Body of pancreas (tissue), 4 donors: ENCODE measurements at regions of chr22 and their contacts with region 1.

Region 1: DNA sequence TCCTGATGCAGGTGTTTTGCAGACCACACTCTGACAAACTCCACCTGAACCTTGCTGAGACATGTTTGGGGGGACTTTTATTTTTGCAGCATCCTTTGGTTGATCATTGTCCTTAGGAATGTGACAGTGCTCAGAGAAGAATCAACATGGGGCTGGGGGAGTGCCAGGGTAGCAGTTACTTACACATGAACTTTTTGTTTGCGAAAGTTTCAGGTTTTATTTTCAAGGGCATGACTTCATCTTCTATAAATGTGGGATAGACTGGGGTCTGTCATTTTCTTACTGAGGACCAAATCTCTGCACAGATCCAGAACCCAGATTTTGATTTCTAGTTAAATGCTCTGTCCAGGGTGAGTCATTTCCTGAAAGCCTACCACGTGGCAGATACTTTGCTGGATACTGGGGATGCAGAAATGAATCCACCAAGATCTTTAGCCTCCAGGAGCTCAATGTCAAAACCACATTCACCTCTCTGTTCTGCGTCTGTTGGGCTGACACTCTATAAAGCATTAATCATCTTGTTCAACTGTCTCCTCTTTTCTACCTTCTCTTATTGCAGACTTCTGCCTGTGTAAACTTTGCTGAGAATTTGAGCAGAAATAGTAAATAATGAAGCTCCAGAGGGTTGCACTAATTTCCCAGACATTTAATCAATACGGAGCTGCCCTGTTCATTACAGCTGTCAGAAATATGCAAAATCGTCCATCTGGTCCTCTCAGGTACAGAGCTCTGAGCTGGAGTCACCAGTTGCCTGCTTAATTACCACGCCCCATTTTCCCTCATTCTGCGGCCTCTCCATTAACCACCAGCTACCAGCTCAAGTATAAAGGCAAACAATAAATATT is 387.9 kb downstream of the MIAT start:
- DNase-seq: peak; percentile 13 to 23 (median 16)
- ATAC-seq: peak; percentile 62
- H3K4me3 ChIP-seq: no peak overlapping the region
- H3K27ac ChIP-seq: no peak overlapping the region
- H3K4me1 ChIP-seq: peaks cover 15% of the 10 kb centered on the region
- H3K27me3 ChIP-seq: no peaks in the 10 kb centered on the region
- CTCF ChIP-seq: no peak
- POLR2A ChIP-seq: no peak

Region 2: DNA sequence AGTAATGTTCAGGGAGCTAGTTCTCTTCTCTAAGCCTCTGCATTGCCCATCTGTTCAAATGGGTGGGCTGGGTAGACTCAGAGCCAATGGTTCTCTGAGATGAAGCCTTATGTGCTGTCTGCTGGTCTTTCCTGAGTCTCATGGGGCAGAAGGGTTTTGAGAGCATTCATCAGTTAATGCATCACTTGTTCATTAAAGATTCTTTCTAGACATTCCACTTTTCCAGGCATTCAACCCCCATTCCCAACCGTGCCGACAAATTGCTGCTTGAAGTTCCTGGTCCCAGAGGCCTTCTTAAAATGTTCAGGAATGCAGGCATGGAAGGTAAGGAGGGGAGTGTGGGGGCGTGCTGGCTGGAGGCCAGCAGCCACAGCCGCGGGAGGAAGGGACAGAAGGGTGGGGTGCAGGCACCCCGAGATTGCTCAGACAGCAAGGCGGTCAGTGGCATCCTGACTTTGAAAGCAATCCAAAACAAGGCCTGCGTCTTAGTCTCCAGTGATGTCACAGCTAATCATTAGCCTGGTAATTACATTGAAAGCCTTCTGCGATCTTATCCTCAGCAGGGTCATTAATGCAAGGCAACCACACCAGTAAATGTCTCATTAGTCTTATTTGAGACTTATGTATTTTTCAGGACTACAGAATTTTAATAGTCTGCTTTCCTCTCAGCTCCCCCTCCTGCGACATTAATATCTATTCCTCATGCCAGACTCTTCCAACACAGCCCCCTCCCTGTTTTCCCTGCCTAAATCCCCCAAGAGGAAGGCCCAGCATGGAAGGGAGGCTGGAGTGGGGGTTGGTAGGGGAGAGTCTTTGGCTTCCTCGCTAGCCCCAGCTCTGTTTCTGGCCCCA is 59.2 kb before region 1 on chr22:
- intact Hi-C with region 1: loop called (anchors 10 kb)
- DNase-seq: no peak
- ATAC-seq: no peak
- H3K4me3 ChIP-seq: no peak overlapping the region
- H3K27ac ChIP-seq: no peak overlapping the region
- H3K4me1 ChIP-seq: no peaks in the 10 kb centered on the region
- H3K27me3 ChIP-seq: no peaks in the 10 kb centered on the region
- CTCF ChIP-seq: no peak
- POLR2A ChIP-seq: no peak